ENCODE measurements at regions of chr12 and their contacts with region 1.

Region 1: GRCh38 chr12:76621582-76622024 is 62.0 kb upstream of the OSBPL8 start:
- DNase-seq: peak; percentile 42 to 86
- ATAC-seq: peak; percentile 85 to 90 (median 89)
- H3K4me3 ChIP-seq: no peak overlapping the region
- H3K4me3 Mint-ChIP-seq: no peak overlapping the region
- H3K27ac ChIP-seq: no peak overlapping the region
- H3K27ac Mint-ChIP-seq: no peak overlapping the region
- H3K4me1 ChIP-seq: no peaks in the 10 kb centered on the region
- H3K4me1 Mint-ChIP-seq: no peaks in the 10 kb centered on the region
- H3K27me3 ChIP-seq: no peaks in the 10 kb centered on the region
- H3K27me3 Mint-ChIP-seq: no peaks in the 10 kb centered on the region
- CTCF ChIP-seq: peak; percentile 96

Region 2: DNA sequence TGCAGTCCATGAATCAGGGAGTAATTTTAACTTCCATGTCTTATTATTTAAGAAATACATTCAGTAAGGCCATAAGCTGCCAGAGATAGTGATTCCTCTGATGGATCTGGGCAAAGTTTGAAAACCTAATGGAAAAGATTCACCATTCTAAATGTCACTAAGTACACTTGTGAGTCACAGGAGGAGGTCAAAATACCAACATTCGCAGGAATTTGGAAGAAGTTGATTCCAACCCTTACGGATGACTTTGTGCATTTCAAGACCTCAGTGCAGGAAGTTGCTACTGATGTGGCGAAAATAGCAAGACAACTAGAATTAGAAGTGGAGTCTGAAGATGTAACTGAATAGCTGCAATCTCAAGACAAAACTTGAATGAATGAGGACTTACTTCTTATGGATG is 131.9 kb before region 1 on chr12:
- intact Hi-C with region 1: no loop called
- DNase-seq: no peak
- ATAC-seq: no peak
- H3K4me3 ChIP-seq: no peak overlapping the region
- H3K4me3 Mint-ChIP-seq: no peak overlapping the region
- H3K27ac ChIP-seq: no peak overlapping the region
- H3K27ac Mint-ChIP-seq: peak overlapping the region in 1 of 2 donors; percentile 64
- H3K4me1 ChIP-seq: no peaks in the 10 kb centered on the region
- H3K4me1 Mint-ChIP-seq: peaks cover 39 to 56% of the 10 kb centered on the region in 2 donors
- H3K27me3 ChIP-seq: no peaks in the 10 kb centered on the region
- H3K27me3 Mint-ChIP-seq: no peaks in the 10 kb centered on the region
- CTCF ChIP-seq: no peak

Region 3: DNA sequence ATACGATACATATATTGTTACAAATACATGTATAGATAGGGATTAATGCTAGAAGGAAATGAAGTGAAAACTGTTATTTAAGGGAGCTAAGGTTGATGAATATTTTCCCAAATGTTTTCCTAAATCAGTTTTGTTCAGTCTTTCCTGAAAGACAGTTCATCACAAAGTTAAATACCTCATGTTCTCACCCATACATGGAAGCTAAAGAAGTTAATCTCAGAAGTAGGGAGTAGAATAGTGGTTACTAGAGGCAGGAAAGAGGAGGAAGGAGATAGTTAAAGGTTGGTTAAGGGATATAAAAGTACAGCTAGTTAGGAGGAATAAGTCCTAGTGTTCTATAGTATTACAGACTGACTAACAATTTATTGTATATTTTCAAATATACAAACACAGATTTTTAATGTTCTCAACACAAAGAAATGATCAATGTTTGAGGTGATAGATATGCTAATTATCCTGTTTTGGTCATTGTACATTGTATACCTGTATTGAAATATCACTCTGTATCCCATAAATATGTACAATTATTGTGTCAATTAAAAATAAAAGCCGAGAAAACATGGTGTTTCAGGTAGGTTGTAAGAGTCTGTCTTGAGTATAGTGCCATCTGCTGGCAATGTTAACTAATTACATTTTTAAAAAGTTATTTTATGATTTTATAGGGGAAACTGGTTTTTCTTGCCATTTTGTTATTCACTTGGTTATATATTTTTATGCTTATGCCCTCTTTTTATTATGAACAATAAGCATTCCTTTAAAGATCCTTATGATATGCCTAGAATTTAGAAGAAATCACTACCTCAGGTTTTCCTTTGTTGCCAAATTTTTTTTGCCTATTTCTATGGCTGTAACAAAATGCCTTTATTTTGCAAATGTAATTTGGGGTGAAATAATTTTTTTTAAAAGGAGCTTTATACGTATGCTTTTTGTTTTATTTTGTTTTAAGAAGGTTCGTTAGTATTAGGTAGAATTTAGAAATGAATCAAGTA is 169.3 kb after region 1 on chr12:
- intact Hi-C with region 1: loop called (anchors 1 kb)
- DNase-seq: peak in 1 of 2 donors; percentile 60
- ATAC-seq: peak in 2 of 3 donors; percentile 36 to 50
- H3K4me3 ChIP-seq: no peak overlapping the region
- H3K4me3 Mint-ChIP-seq: no peak overlapping the region
- H3K27ac ChIP-seq: no peak overlapping the region
- H3K27ac Mint-ChIP-seq: peak overlapping the region in 1 of 2 donors; percentile 45
- H3K4me1 ChIP-seq: no peaks in the 10 kb centered on the region
- H3K4me1 Mint-ChIP-seq: peaks cover 18 to 29% of the 10 kb centered on the region in 2 donors
- H3K27me3 ChIP-seq: no peaks in the 10 kb centered on the region
- H3K27me3 Mint-ChIP-seq: no peaks in the 10 kb centered on the region
- CTCF ChIP-seq: peak; percentile 89

Region 4: GRCh38 chr12:77010691-77011548 is 389.3 kb after region 1 on chr12:
- intact Hi-C with region 1: loop called (anchors 1 kb)
- DNase-seq: peak; percentile 44 to 72
- ATAC-seq: peak; percentile 78 to 92 (median 82)
- H3K4me3 ChIP-seq: no peak overlapping the region
- H3K4me3 Mint-ChIP-seq: no peak overlapping the region
- H3K27ac ChIP-seq: no peak overlapping the region
- H3K27ac Mint-ChIP-seq: no peak overlapping the region
- H3K4me1 ChIP-seq: no peaks in the 10 kb centered on the region
- H3K4me1 Mint-ChIP-seq: peaks cover 6% of the 10 kb centered on the region in 2 donors
- H3K27me3 ChIP-seq: no peaks in the 10 kb centered on the region
- H3K27me3 Mint-ChIP-seq: peaks cover 0 to 2% of the 10 kb centered on the region in 2 donors
- CTCF ChIP-seq: peak; percentile 87